ENCODE measurements at regions of chr12 and their contacts with region 1.

Region 1: DNA sequence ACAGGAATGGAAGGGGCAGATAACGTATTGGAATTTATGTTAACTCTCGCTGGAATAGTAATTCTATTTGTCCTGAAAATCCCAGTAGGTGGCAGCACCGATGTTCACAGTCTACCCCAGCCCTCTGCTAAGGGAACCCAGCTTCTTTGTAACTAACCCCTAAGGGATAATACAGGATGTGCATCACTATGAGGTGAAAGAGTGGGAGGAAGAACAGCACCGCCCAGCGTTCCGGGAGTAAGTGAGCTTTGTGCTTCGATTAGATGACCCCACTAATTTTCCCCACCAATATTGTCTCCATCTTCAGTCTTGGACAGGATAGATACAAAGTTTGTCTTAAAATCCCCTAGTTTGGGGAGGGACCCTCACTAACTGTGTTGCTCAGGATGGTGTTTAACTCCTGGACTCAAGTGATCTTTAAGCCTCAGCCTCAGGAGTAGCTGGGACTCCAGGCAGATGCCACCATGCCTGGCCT is 2.7 kb downstream of the SLC2A3 start:
- DNase-seq: peak; percentile 64
- H3K4me3 Mint-ChIP-seq: no peak overlapping the region
- H3K27ac Mint-ChIP-seq: no peak overlapping the region
- H3K4me1 Mint-ChIP-seq: peaks cover 36% of the 10 kb centered on the region
- H3K27me3 Mint-ChIP-seq: no peaks in the 10 kb centered on the region

Region 2: GRCh38 chr12:6953442-6954315 is 979.6 kb before region 1 on chr12:
- intact Hi-C with region 1: loop called (anchors 5 kb)
- DNase-seq: peak; percentile 79
- H3K4me3 Mint-ChIP-seq: peak overlapping the region; percentile 98
- H3K27ac Mint-ChIP-seq: peak overlapping the region; percentile 97
- H3K4me1 Mint-ChIP-seq: peaks cover 80% of the 10 kb centered on the region
- H3K27me3 Mint-ChIP-seq: no peaks in the 10 kb centered on the region

Region 3: GRCh38 chr12:7497661-7498060 is 435.6 kb before region 1 on chr12:
- intact Hi-C with region 1: no loop called
- DNase-seq: no peak
- H3K4me3 Mint-ChIP-seq: no peak overlapping the region
- H3K27ac Mint-ChIP-seq: no peak overlapping the region
- H3K4me1 Mint-ChIP-seq: no peaks in the 10 kb centered on the region
- H3K27me3 Mint-ChIP-seq: peaks cover 5% of the 10 kb centered on the region

Region 4: GRCh38 chr12:7628381-7628961 is 304.8 kb before region 1 on chr12:
- intact Hi-C with region 1: no loop called
- DNase-seq: no peak
- H3K4me3 Mint-ChIP-seq: no peak overlapping the region
- H3K27ac Mint-ChIP-seq: no peak overlapping the region
- H3K4me1 Mint-ChIP-seq: no peaks in the 10 kb centered on the region
- H3K27me3 Mint-ChIP-seq: peaks cover 16% of the 10 kb centered on the region

Region 5: DNA sequence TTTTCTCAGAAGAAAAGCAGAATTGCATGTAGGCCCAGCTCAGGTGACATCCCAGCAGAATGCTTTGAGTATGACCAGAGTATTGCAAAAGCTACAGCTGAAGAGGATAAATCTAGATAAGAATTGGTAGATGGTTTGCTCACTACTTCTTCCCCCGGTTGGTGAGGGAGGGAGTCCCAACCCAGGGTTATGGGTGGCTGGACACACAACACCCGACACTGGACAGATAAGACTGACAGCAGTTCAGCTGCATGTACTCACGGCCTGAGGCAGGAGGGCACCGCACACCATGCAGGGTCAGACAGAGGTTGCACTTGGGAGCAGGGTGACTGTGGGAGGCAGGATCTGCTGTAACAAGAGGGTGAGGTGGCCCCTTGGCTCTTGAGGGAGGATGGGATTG is 184.4 kb before region 1 on chr12:
- intact Hi-C with region 1: no loop called
- DNase-seq: no peak
- H3K4me3 Mint-ChIP-seq: no peak overlapping the region
- H3K27ac Mint-ChIP-seq: no peak overlapping the region
- H3K4me1 Mint-ChIP-seq: no peaks in the 10 kb centered on the region
- H3K27me3 Mint-ChIP-seq: no peaks in the 10 kb centered on the region

Region 6: DNA sequence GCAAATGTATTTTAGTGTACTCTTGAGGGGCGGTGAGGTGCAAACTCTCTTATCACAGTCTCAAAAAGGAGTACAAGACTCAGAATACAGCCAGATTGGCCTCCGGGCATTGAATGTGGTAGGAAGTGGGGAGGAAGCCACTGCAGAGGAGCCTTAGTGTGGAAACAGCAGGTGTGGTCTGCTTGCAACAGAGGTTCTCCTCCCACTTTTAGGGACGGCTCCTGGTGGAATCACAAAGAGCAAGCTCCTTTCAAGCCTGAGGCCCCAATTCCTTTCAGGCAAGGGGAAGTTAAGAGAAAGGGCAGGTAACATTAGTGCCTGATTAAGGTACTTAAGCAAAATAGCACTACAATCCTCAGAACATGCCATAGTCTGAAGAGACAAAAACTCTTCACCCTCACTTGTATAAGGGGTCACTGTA is 26.4 kb after region 1 on chr12:
- intact Hi-C with region 1: loop called (anchors 1 kb)
- DNase-seq: peak; percentile 56
- H3K4me3 Mint-ChIP-seq: peak overlapping the region; percentile 92
- H3K27ac Mint-ChIP-seq: peak overlapping the region; percentile 97
- H3K4me1 Mint-ChIP-seq: peaks cover 52% of the 10 kb centered on the region
- H3K27me3 Mint-ChIP-seq: no peaks in the 10 kb centered on the region

Region 7: DNA sequence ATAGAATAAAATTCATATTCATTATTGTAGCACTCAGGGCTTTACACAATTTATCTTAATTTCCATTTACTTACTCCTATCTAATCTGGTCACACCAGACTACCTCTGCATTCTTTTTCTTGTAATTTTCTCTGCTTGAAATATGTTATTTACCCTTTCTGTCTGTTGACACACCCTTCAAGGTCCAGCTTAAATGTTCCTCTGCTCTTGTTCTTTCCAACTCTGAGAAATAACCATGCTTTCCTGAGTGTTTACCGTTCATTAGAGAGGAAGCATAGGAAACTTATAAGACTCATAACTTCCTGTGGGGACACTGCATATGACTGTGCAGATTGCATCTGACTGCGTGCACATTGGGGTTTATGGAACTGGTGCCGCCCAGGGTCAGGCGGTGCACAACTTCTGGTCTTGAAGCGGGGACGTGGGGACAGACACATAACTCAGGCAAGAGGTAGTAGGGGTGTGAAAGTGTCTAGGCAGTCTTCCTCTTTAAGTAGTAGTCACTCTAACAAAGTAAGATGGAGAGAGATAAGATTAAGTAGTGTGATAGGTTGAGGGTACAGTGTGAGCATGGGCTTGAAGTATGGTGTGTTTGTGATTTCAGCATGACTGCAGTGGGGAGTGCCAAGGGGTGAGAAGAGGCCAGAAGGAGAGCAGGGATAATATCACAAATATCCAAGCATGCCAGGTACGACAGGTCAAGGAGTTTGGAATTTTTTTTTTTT is 56.7 kb after region 1 on chr12:
- intact Hi-C with region 1: loop called (anchors 1 kb)
- DNase-seq: peak; percentile 76
- H3K4me3 Mint-ChIP-seq: peak overlapping the region; percentile 54
- H3K27ac Mint-ChIP-seq: peak overlapping the region; percentile 93
- H3K4me1 Mint-ChIP-seq: peaks cover 32% of the 10 kb centered on the region
- H3K27me3 Mint-ChIP-seq: no peaks in the 10 kb centered on the region

Region 8: GRCh38 chr12:8026291-8026900 is 93.1 kb after region 1 on chr12:
- intact Hi-C with region 1: loop called (anchors 1 kb)
- DNase-seq: peak; percentile 96
- H3K4me3 Mint-ChIP-seq: peak overlapping the region; percentile 93
- H3K27ac Mint-ChIP-seq: peak overlapping the region; percentile 99
- H3K4me1 Mint-ChIP-seq: peaks cover 19% of the 10 kb centered on the region
- H3K27me3 Mint-ChIP-seq: no peaks in the 10 kb centered on the region

Region 9: DNA sequence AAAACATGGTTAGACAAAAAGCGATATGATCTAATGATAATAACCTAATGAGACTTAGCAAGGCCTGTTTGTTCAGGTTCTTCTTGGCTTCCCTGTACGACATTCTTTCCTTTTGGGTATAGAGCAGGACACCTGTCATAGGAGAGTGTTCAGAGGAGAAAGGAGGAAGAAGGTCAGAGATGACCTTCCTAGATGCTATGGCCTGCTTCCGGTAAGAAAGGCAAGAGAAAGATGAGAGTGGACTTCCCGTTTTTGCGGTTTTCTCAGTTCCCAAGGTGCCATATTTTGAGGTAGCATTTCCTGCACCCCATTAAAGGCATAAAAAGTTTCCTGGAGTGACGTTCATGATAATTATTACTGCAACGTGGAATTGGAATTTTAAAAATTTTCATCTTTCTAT is 598.8 kb after region 1 on chr12:
- intact Hi-C with region 1: no loop called
- DNase-seq: no peak
- H3K4me3 Mint-ChIP-seq: no peak overlapping the region
- H3K27ac Mint-ChIP-seq: no peak overlapping the region
- H3K4me1 Mint-ChIP-seq: no peaks in the 10 kb centered on the region
- H3K27me3 Mint-ChIP-seq: peaks cover 24% of the 10 kb centered on the region

Measured in activated T-helper 1 cell treated with anti-CD3 and anti-CD28 coated beads, Interleukin-12 subunit alpha, Interleukin-12 subunit beta, Interleukin-2, Interleukin-4 antibody, amounts not matched to agents 30 ng/mL and 10 ng/mL and 1 ng/mL, durations not matched to agents 14 hours and 24 hours and 36 hours (primary cell).